Common myeloid progenitor, CD34-positive (primary cell): ENCODE measurements at regions of chr2 and their contacts with region 1.

Region 1: GRCh38 chr2:201231781-201232466 is 28.4 kb upstream of the CASP8 start:
- DNase-seq: peak; percentile 96 to 97 (median 97)
- H3K4me3 ChIP-seq: peak overlapping the region in 3 of 7 experiments; percentile 4 to 53 (median 35)
- H3K27ac ChIP-seq: peak overlapping the region in 1 of 2 experiments; percentile 62
- H3K4me1 ChIP-seq: peaks cover 31 to 73% (median 57%) of the 10 kb centered on the region in 4 experiments
- H3K27me3 ChIP-seq: no peaks in the 10 kb centered on the region

Region 2: DNA sequence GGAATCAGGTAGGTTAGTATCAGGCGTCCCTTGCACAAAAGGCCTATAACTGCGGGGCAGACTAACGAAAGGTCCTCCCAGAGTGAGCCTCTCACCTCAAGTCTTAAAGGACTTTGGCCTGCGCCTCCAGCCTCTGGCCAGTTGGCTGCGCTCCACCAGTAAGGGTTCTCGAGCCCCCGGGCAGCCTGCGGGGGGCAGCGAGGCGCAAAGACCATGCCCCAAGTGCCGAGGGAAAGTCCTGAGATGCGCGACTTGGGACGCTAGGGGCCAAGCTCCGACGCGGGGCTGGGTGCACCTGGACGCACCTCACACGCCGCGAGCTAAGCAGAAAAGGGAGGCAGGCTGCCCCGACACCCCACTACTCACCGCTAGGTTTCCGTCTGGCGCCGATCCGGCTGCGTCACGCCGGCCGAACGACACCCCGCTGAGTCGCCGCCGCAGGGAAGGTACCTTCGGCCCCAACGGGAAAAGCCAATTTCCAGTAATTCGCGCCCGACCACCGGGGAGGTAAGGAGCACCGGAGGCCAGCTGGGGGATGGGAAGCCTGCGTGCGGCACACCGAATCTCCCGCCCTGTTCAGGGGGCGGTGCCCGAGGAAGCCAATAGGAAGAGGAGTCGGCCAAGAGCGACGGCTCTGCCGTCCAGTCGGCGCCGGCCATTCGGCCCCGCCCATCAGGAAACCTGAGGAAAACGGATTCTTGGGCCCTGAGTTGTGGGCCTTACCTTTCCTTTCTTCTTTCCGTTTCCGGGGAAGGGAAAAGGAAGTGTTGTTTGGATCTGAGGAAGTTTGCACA is 268.6 kb before region 1 on chr2 and contains the start of gene ORC2:
- CTCF ChIA-PET with region 1: interaction called, 16 read pairs
- POLR2A ChIA-PET with region 1: no interaction called
- DNase-seq: peak; percentile 95 to 96 (median 96)
- H3K4me3 ChIP-seq: peak within 1 kb of the TSS; percentile 80 to 97 (median 91)
- H3K27ac ChIP-seq: peak within 1 kb of the TSS; percentile 84 to 92
- H3K4me1 ChIP-seq: peaks cover 9 to 30% (median 20%) of the 10 kb centered on the region in 4 experiments
- H3K27me3 ChIP-seq: no peaks in the 10 kb centered on the region

Region 3: DNA sequence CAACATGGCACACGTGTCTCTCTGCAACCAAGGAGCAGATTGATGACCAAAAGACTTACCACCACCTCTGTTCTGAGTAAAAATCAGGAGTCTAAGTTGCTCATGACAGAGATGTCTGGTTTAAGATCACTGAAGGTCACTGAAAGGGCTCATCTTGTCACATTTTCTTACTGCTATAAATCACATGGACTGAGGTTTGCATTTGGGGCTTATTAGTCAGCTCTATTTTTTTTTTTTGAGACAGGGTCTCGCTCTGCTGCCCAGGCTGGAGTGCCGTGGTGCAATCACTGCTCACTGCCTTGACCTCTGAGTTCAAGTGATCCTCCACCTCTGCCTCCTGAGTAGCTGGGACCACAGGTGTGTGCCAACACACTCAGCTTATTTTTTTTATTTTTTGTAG is 96.5 kb before region 1 on chr2:
- CTCF ChIA-PET with region 1: no interaction called
- POLR2A ChIA-PET with region 1: no interaction called
- DNase-seq: no peak
- H3K4me3 ChIP-seq: no peak overlapping the region
- H3K27ac ChIP-seq: no peak overlapping the region
- H3K4me1 ChIP-seq: peaks cover 19 to 38% (median 34%) of the 10 kb centered on the region in 4 experiments
- H3K27me3 ChIP-seq: no peaks in the 10 kb centered on the region

Region 4: DNA sequence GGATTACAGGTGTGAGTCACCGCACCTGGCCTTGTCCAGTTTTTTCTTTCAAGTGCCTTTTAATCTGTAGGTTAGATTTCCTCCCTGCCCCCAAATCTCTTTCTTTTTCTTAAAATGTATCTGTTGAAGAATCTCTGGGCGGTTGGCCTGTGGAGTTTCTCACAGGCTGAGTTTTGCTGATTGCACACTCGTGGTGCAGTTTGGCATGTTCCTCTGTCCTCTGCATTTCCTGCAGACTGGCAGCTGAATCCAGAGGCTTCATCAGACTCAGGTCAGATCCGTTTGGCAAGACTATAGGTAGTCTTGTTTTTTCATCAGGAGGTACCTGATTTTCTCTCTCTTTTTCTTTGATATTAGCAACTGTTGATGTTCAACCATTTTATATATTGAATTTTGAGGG is 43.5 kb before region 1 on chr2:
- CTCF ChIA-PET with region 1: interaction called, 80 read pairs
- POLR2A ChIA-PET with region 1: interaction called, 14 read pairs
- DNase-seq: peak in 2 of 3 donors; percentile 40 to 55
- H3K4me3 ChIP-seq: no peak overlapping the region
- H3K27ac ChIP-seq: no peak overlapping the region
- H3K4me1 ChIP-seq: peaks cover 56 to 94% (median 70%) of the 10 kb centered on the region in 4 experiments
- H3K27me3 ChIP-seq: no peaks in the 10 kb centered on the region

Region 5: DNA sequence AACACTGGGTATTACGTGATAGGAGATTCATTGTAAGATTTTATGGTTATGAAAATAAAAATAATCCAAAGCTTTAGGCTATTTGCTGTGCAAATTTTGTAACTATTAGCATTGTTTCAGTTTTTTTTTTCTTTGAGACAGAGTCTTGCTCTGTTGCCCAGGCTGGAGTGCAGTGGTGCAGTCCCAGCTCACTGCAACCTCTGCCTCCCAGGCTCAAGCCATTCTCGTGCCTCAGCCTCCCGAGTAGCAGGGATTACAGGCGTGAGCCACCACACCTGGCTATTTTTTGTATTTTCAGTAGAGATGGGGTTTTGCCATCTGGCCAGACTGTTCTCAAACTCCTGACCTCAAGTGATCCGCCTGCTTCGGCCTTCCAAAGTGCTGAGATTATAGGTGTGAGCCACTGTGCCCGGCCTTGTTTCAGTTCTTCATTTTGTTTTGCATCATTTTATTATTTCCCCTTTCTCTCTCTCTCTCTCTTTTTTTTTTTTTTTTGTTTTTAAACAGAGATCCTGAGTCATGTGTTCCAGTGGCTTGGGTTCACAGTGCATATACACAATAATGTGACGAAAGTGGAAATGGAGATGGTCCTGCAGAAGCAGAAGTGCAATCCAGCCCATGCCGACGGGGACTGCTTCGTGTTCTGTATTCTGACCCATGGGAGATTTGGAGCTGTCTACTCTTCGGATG is 23.2 kb before region 1 on chr2:
- CTCF ChIA-PET with region 1: interaction called, 16 read pairs
- POLR2A ChIA-PET with region 1: interaction called, 4 read pairs
- DNase-seq: peak in 2 of 3 donors; percentile 42 to 47
- H3K4me3 ChIP-seq: no peak overlapping the region
- H3K27ac ChIP-seq: no peak overlapping the region
- H3K4me1 ChIP-seq: peaks cover 0 to 7% (median 3%) of the 10 kb centered on the region in 4 experiments
- H3K27me3 ChIP-seq: no peaks in the 10 kb centered on the region

Region 6: GRCh38 chr2:201263779-201264178 is 31.9 kb after region 1 on chr2:
- CTCF ChIA-PET with region 1: interaction called, 45 read pairs
- POLR2A ChIA-PET with region 1: no interaction called
- DNase-seq: peak in 2 of 3 donors; percentile 31 to 50
- H3K4me3 ChIP-seq: peak overlapping the region in 3 of 7 experiments; percentile 8 to 73 (median 46)
- H3K27ac ChIP-seq: peak overlapping the region in 1 of 2 experiments; percentile 71
- H3K4me1 ChIP-seq: peaks cover 42 to 63% (median 54%) of the 10 kb centered on the region in 4 experiments
- H3K27me3 ChIP-seq: no peaks in the 10 kb centered on the region

Region 7: GRCh38 chr2:201320701-201321100 is 88.8 kb after region 1 on chr2:
- CTCF ChIA-PET with region 1: no interaction called
- POLR2A ChIA-PET with region 1: no interaction called
- DNase-seq: no peak
- H3K4me3 ChIP-seq: no peak overlapping the region
- H3K27ac ChIP-seq: no peak overlapping the region
- H3K4me1 ChIP-seq: no peaks in the 10 kb centered on the region
- H3K27me3 ChIP-seq: no peaks in the 10 kb centered on the region